MCF 10A (cell line): ENCODE measurements at regions of chr2 and their contacts with region 1.

Region 1: DNA sequence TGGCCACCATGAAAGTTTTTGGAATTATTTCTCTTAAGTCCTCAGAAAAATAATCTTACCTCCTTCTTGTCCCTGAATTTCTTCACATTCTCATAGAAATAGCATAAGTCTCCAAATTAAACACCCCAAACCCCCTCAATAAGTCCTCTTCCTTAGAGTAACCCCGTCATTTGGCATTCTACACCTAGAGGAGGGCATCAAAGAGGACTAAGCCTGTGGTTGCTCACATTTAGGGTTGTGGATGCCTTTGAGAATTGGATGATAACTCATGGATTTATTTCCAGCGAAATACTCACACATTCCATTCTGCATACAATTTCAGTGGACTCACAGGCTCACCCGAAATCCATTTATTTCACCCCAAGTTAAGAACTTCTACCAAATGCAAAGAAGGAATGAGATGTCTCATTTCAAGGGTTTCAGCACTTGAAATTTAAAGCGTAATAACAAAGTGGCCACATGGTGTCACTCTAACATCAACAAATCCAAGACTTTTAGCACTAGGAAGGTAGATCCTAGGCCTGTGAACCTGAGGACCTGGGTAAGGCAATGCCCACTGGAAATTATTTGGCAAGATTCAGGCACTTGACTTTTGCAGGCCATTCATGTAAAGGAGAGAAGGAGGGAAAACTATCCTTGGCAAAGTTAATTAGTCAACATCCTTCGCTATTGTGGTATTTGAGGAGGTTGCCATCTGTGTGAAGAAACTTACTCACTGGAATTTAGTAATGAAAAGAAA is 24.6 kb downstream of the DYTN start:
- DNase-seq: peak; percentile 73
- H3K4me3 Mint-ChIP-seq: no peak overlapping the region
- H3K27ac Mint-ChIP-seq: no peak overlapping the region
- H3K4me1 Mint-ChIP-seq: no peaks in the 10 kb centered on the region
- H3K27me3 Mint-ChIP-seq: no peaks in the 10 kb centered on the region
- CTCF ChIP-seq: peak; percentile 70

Region 2: GRCh38 chr2:206765242-206766056 is 71.9 kb after region 1 on chr2 and contains the starts of genes FASTKD2 and MDH1B:
- CTCF ChIA-PET with region 1: interaction called, 10 read pairs
- POLR2A ChIA-PET with region 1: no interaction called
- intact Hi-C with region 1: loop called (anchors 5 kb)
- DNase-seq: peak; percentile 94
- H3K4me3 Mint-ChIP-seq: peak within 1 kb of the TSS; percentile 85
- H3K27ac Mint-ChIP-seq: peak within 1 kb of the TSS; percentile 97
- H3K4me1 Mint-ChIP-seq: peaks cover 25% of the 10 kb centered on the region
- H3K27me3 Mint-ChIP-seq: no peaks in the 10 kb centered on the region
- CTCF ChIP-seq: no peak
- total RNA-seq, gene FASTKD2: 28.9 and 34.6 TPM in 2 replicates
- total RNA-seq, gene MDH1B: 0.66 and 0.77 TPM in 2 replicates